ENCODE measurements at regions of chr20 and their contacts with region 1.

Region 1: GRCh38 chr20:46363800-46364634 is 42.4 kb downstream of the ELMO2 start:
- DNase-seq: peak; percentile 91
- ATAC-seq: peak; percentile 96
- H3K4me3 ChIP-seq: peak overlapping the region; percentile 96
- H3K27ac ChIP-seq: peak overlapping the region; percentile 86
- H3K4me1 ChIP-seq: peaks cover 2% of the 10 kb centered on the region; the same call in 1 of the 2 replicates
- H3K27me3 ChIP-seq: no peaks in the 10 kb centered on the region
- CTCF ChIP-seq: no peak
- POLR2A ChIP-seq: peak; percentile 94
- RAD21 ChIP-seq: no peak

Region 2: DNA sequence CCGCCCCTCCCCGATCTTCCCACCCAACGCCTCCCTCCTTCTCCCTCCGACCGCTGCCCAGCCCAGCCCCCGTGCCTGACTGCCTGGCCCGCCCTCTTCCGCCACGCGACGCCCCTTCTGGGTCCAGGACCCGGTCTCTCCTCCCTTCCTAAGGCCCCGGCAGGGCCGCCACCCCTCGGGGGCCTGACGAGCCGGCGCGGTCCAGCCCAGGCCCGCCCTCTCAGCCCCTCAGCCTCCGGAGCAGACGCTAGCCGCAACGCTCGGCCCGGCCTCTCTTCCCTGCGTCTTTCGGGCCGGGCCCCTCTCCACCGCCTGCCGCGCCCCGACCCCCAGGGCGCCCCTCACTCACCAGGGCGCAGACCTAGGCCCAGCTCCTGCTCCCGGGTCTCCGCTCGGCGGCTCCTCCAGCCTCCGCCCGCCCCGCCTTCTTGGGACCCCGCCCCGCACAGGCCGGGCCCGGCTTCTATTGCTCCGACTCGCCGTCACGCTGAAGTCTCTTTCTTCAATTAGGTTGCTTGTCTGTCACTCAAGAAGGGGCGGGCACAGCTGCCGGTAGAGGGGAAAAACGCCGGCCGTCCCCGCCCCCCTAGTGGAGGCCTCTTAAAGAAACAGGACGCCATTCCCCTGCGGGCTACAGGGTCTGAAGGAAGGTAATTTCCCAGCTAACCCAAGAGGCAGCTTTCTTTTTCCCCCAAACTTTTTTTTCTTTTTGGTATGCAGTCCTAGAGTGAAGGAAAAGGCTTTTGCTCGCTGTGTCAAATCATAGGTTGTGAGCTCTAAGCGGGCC is 42.4 kb after region 1 on chr20 and contains the start of gene ELMO2:
- CTCF ChIA-PET with region 1: no interaction called
- POLR2A ChIA-PET with region 1: interaction called, 7 read pairs
- dilution Hi-C with region 1: no loop called
- in situ Hi-C with region 1: no loop called
- intact Hi-C with region 1: loop called (anchors 2 kb)
- DNase-seq: peak; percentile 95
- ATAC-seq: peak; percentile 90
- H3K4me3 ChIP-seq: peak within 1 kb of the TSS; percentile 74
- H3K27ac ChIP-seq: peak within 1 kb of the TSS; percentile 87
- H3K4me1 ChIP-seq: peaks cover 18% of the 10 kb centered on the region
- H3K27me3 ChIP-seq: no peaks in the 10 kb centered on the region
- CTCF ChIP-seq: no peak
- POLR2A ChIP-seq: no peak
- RAD21 ChIP-seq: no peak
- total RNA-seq, gene ELMO2: 45.0 and 52.7 TPM in 2 replicates

Region 3: GRCh38 chr20:46599227-46599987 is 235.4 kb after region 1 on chr20:
- CTCF ChIA-PET with region 1: no interaction called
- POLR2A ChIA-PET with region 1: interaction called, 13 read pairs
- dilution Hi-C with region 1: no loop called
- in situ Hi-C with region 1: no loop called
- intact Hi-C with region 1: no loop called
- DNase-seq: no peak
- ATAC-seq: no peak
- H3K4me3 ChIP-seq: no peak overlapping the region
- H3K27ac ChIP-seq: no peak overlapping the region
- H3K4me1 ChIP-seq: no peaks in the 10 kb centered on the region
- H3K27me3 ChIP-seq: no peaks in the 10 kb centered on the region
- CTCF ChIP-seq: no peak
- POLR2A ChIP-seq: no peak
- RAD21 ChIP-seq: no peak

Region 4: GRCh38 chr20:46945465-46945864 is 581.4 kb after region 1 on chr20:
- CTCF ChIA-PET with region 1: no interaction called
- POLR2A ChIA-PET with region 1: no interaction called
- dilution Hi-C with region 1: no loop called
- in situ Hi-C with region 1: no loop called
- intact Hi-C with region 1: no loop called
- DNase-seq: peak; percentile 30
- ATAC-seq: peak; percentile 42
- H3K4me3 ChIP-seq: no peak overlapping the region
- H3K27ac ChIP-seq: no peak overlapping the region
- H3K4me1 ChIP-seq: no peaks in the 10 kb centered on the region
- H3K27me3 ChIP-seq: no peaks in the 10 kb centered on the region
- CTCF ChIP-seq: no peak
- POLR2A ChIP-seq: no peak
- RAD21 ChIP-seq: no peak